Gastrocnemius medialis (tissue), 4 donors: ENCODE measurements at regions of chr7 and their contacts with region 1.

Region 1: GRCh38 chr7:20598459-20599309 is 16.8 kb upstream of the ABCB5 start:
- DNase-seq: no peak
- ATAC-seq: peak; percentile 68 to 72
- H3K4me3 ChIP-seq: peak overlapping the region in 2 of 4 donors; percentile 23 to 29
- H3K27ac ChIP-seq: no peak overlapping the region
- H3K4me1 ChIP-seq: no peaks in the 10 kb centered on the region
- H3K27me3 ChIP-seq: no peaks in the 10 kb centered on the region
- CTCF ChIP-seq: peak; percentile 53 to 72 (median 71)
- POLR2A ChIP-seq: no peak

Region 2: GRCh38 chr7:19708397-19709248 is 890.1 kb before region 1 on chr7 and contains the start of gene POLR1F:
- in situ Hi-C with region 1: loop called in 3 of 4 experiments (anchors 5 to 10 kb)
- intact Hi-C with region 1: loop called (anchors 2 kb)
- DNase-seq: peak; percentile 80 to 90
- ATAC-seq: peak; percentile 94 to 96
- H3K4me3 ChIP-seq: peak within 1 kb of the TSS; percentile 78 to 93 (median 85)
- H3K27ac ChIP-seq: peak within 1 kb of the TSS; percentile 72 to 81 (median 80)
- H3K4me1 ChIP-seq: peaks cover 5 to 21% of the 10 kb centered on the region in 2 donors
- H3K27me3 ChIP-seq: no peaks in the 10 kb centered on the region
- CTCF ChIP-seq: peak; percentile 82 to 93 (median 84)
- POLR2A ChIP-seq: peak; percentile 71 to 82
- total RNA-seq, gene POLR1F: 8.0 to 18.0 (median 9.2) TPM

Region 3: DNA sequence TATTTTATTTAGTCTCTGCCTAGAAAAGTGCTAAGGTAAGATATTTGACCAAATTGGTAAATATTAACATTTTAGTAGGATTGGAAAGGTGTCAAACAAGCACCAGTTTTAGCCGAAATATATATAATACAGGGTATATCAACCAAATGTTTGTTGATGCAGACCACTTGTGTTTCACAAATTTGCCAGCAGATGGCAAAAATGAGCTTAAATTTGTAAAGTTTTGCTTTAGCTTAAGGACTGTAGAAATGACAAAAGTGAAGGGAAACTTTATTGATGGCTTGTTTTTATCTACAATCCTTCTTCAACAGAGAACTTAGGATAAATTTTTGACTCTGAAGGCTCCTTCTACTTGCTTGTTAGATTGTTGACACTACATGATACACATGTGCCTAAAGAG is 885.0 kb before region 1 on chr7:
- in situ Hi-C with region 1: loop called in 3 of 4 experiments (anchors 5 to 10 kb)
- intact Hi-C with region 1: loop called (anchors 2 kb)
- DNase-seq: no peak
- ATAC-seq: no peak
- H3K4me3 ChIP-seq: no peak overlapping the region
- H3K27ac ChIP-seq: no peak overlapping the region
- H3K4me1 ChIP-seq: peaks cover 0 to 4% of the 10 kb centered on the region in 2 donors
- H3K27me3 ChIP-seq: no peaks in the 10 kb centered on the region
- CTCF ChIP-seq: peak in 3 of 5 experiments; percentile 18 to 48 (median 35)
- POLR2A ChIP-seq: no peak

Region 4: DNA sequence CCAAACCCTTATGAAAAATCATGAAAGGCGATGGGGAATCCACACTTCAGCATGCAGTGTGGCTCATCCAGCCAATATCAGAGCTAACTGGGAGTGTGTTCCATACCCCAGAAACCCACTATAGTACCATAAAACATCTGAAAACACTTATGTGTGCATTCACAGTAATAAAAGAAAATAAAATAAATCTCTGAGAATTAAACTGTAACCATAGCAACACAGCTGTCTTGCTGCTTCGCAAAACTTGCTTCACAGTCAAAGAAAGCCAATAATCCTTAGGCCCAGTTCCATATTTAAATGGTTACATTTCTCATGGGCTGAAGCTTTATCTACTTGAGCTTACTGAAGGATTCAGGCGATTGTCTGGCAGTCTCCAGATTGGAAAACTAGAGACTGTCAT is 870.0 kb before region 1 on chr7:
- in situ Hi-C with region 1: loop called in 1 of 4 experiments (anchors 10 kb)
- intact Hi-C with region 1: no loop called
- DNase-seq: no peak
- ATAC-seq: no peak
- H3K4me3 ChIP-seq: no peak overlapping the region
- H3K27ac ChIP-seq: no peak overlapping the region
- H3K4me1 ChIP-seq: no peaks in the 10 kb centered on the region
- H3K27me3 ChIP-seq: no peaks in the 10 kb centered on the region
- CTCF ChIP-seq: no peak
- POLR2A ChIP-seq: no peak

Region 5: GRCh38 chr7:19747740-19748339 is 850.8 kb before region 1 on chr7:
- in situ Hi-C with region 1: no loop called
- intact Hi-C with region 1: loop called (anchors 10 kb)
- DNase-seq: no peak
- ATAC-seq: no peak
- H3K4me3 ChIP-seq: no peak overlapping the region
- H3K27ac ChIP-seq: no peak overlapping the region
- H3K4me1 ChIP-seq: no peaks in the 10 kb centered on the region
- H3K27me3 ChIP-seq: no peaks in the 10 kb centered on the region
- CTCF ChIP-seq: peak in 1 of 5 experiments; percentile 37
- POLR2A ChIP-seq: no peak

Region 6: GRCh38 chr7:20503278-20503950 is 95.3 kb before region 1 on chr7:
- in situ Hi-C with region 1: no loop called
- intact Hi-C with region 1: no loop called
- DNase-seq: no peak
- ATAC-seq: no peak
- H3K4me3 ChIP-seq: no peak overlapping the region
- H3K27ac ChIP-seq: no peak overlapping the region
- H3K4me1 ChIP-seq: no peaks in the 10 kb centered on the region
- H3K27me3 ChIP-seq: no peaks in the 10 kb centered on the region
- CTCF ChIP-seq: no peak
- POLR2A ChIP-seq: no peak

Region 7: DNA sequence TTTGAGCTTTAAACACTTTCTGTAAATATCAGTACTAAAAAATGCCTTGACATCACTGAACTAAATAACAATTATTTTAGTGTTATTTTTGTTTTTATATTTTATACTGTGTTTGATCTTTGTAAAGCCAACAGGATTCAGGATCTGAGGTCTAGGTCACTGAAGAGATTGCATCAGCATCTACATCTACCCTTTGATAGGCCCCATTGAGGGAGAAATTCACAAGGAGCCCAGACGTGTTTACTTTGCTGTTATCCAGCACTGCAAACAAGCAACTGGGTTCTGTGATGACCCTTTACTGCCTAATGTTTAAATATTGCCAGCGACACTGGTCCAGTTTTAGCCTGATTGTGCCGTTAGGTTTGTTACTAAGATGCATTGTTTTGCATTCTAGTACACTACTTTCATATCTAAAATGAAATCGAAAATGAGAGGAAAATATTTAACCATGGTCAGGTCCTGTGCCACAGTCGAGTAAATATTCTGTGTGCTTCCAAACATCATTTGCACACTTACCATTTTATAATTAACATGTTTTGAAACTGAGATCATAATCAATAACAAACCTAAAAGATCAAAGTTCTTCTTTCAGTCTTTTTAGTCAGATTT is 139.3 kb after region 1 on chr7:
- in situ Hi-C with region 1: no loop called
- intact Hi-C with region 1: no loop called
- DNase-seq: no peak
- ATAC-seq: no peak
- H3K4me3 ChIP-seq: no peak overlapping the region
- H3K27ac ChIP-seq: no peak overlapping the region
- H3K4me1 ChIP-seq: no peaks in the 10 kb centered on the region
- H3K27me3 ChIP-seq: no peaks in the 10 kb centered on the region
- CTCF ChIP-seq: no peak
- POLR2A ChIP-seq: no peak

Region 8: DNA sequence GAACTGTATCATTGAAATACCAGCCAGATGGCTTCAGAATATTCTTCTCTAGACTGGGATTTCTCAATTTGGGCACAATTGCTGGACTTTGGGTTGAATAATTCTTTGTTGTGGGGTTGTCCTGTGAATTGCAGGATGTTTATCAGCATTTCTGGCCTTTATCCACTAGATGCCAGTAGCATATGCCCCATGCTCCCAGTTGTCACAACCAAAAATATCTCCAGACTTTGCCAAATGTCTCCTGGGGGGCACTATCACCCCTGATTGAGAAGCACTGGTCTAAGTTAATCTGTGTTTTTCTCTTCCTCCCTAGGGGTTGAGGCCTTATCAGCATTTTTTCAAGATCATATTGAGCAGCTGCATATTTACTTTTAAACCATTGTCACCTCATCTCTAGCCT is 392.9 kb after region 1 on chr7:
- in situ Hi-C with region 1: no loop called
- intact Hi-C with region 1: no loop called
- DNase-seq: no peak
- ATAC-seq: no peak
- H3K4me3 ChIP-seq: no peak overlapping the region
- H3K27ac ChIP-seq: no peak overlapping the region
- H3K4me1 ChIP-seq: no peaks in the 10 kb centered on the region
- H3K27me3 ChIP-seq: no peaks in the 10 kb centered on the region
- CTCF ChIP-seq: no peak
- POLR2A ChIP-seq: no peak